OCI-LY7 (cell line): ENCODE measurements at regions of chr3 and their contacts with region 1.

Region 1: DNA sequence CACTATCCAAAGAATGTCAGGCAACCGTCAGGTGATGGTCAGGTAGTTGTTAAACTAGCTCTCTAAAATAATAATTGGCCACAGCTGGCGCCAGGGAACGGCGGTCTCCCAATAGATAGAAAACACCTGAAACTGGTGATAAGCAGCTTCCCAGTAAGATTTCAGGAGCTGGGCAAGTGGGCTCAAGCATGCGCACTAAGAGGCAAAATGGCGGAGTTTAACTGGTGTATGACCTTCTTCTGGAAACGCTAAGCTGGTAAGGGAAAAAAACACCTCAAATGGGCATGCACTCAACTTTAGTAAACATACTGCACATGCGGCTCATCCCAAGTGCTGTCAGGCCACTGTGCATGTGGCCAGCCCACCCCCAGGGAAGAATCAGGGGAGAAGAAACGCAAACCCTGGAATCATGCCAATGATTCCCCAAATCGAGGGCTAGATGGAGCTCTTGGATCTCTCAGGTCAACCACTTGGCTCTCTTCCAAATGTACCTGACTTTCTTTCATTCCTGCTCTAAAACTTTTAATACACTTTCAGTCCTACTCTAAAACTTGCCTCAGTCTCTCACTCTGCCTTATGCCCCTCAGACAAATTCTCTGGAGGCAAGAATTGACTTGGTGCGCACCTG is 195.0 kb downstream of the ZNF621 start:
- DNase-seq: no peak
- H3K4me3 ChIP-seq: no peak overlapping the region
- H3K27ac ChIP-seq: no peak overlapping the region
- H3K4me1 ChIP-seq: peaks cover 58% of the 10 kb centered on the region
- CTCF ChIP-seq: 0 out of 2 replicates have a peak, but pooled peaks have one; percentile 18

Region 2: GRCh38 chr3:40309418-40309924 is 410.3 kb before region 1 on chr3 and contains the start of gene EIF1B:
- CTCF ChIA-PET with region 1: no interaction called
- POLR2A ChIA-PET with region 1: no interaction called
- intact Hi-C with region 1: loop called (anchors 2 kb)
- DNase-seq: peak; percentile 97
- H3K4me3 ChIP-seq: peak within 1 kb of the TSS; percentile 76
- H3K27ac ChIP-seq: peak within 1 kb of the TSS; percentile 50
- H3K4me1 ChIP-seq: peaks cover 36% of the 10 kb centered on the region
- CTCF ChIP-seq: peak; percentile 86
- total RNA-seq, gene EIF1B: 14.0 and 14.5 TPM in 2 replicates

Region 3: GRCh38 chr3:40465456-40465855 is 254.3 kb before region 1 on chr3:
- CTCF ChIA-PET with region 1: no interaction called
- POLR2A ChIA-PET with region 1: no interaction called
- intact Hi-C with region 1: no loop called
- DNase-seq: no peak
- H3K4me3 ChIP-seq: no peak overlapping the region
- H3K27ac ChIP-seq: no peak overlapping the region
- H3K4me1 ChIP-seq: peaks cover under 1% of the 10 kb centered on the region
- CTCF ChIP-seq: no peak

Region 4: DNA sequence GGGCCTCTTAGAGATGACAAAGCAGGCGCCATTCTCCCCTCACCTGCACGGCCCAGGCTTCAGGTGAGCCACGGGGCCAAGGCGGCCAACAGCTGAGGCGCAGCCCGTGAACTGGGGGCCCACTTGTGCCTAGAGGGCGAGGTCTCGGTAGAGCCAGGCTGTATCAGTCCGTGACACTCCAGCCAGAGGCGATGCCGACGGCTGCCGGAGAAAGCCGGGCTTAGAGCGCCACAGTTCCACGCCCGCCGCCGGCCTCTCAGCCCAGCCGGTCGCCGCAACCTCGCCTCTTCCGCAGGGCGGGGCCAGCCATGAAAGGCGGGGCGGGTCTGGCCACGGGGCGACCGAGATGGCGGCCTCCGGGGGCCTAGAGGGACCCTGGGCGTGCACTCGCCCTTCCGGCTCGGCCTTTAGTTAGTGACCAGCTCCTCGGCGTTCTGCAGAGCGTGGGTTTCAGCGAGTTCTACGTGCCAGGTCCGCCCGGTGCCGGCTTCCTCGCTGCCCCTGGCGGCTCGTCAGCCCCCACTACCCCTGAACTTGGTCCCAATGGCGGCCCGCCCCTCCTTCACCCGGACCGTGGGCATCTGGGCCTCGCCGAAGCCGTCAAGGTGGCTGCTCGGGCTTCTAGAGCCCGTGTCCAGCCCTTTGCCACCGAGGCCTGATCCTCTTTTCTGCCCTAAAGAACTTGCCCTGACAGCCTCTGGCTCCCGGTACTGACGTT is 195.0 kb before region 1 on chr3 and contains the start of gene ZNF621:
- CTCF ChIA-PET with region 1: no interaction called
- POLR2A ChIA-PET with region 1: no interaction called
- intact Hi-C with region 1: loop called (anchors 10 kb)
- DNase-seq: peak; percentile 75
- H3K4me3 ChIP-seq: peak within 1 kb of the TSS; percentile 70
- H3K27ac ChIP-seq: no peak within 1 kb of the TSS
- H3K4me1 ChIP-seq: peaks cover 5% of the 10 kb centered on the region
- CTCF ChIP-seq: no peak
- total RNA-seq, gene ZNF621: 4.8 and 5.0 TPM in 2 replicates

Region 5: DNA sequence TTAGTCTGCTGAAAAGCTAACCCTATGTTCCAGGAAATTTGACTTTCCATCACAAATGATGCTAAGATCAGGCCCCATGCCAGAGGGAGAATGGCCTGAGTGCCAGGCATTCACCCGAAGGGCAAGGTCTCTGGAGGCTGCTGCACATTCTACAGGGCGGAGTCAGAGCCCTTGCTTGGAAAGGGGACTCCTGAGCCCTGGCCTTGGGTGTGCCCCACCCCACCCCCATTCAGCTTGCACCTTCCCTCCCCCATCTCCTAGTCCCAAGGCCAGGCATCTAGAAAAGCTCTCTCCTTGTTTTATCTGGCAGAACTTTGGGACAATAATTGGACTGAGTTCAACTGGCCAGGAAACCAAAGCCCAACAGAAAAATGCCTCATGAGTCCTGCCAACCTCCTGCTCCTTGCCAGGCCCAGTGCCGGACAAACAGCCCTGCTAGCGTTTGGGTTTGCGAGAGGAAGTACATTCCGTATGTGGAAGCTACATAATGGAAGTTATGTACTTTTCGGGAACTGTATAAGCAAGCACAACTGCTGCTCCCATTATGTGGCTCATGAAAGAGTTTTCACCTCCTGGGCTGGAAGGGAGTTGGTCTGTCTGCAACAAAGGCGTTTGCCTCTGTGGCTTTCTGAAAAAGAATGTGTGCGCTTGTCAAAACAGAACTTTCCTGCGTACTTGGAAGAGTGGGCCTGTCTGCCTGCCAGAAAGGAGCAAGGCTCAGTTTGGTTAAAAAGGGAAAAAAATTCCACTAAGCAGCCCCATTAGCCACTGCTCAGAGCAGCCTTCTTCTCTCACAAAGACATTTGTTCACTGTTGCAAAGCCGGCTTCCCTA is 158.1 kb after region 1 on chr3:
- CTCF ChIA-PET with region 1: no interaction called
- POLR2A ChIA-PET with region 1: no interaction called
- intact Hi-C with region 1: no loop called
- DNase-seq: no peak
- H3K4me3 ChIP-seq: no peak overlapping the region
- H3K27ac ChIP-seq: no peak overlapping the region
- H3K4me1 ChIP-seq: no peaks in the 10 kb centered on the region
- CTCF ChIP-seq: no peak